Posterior cingulate gyrus (tissue), 11 donors: ENCODE measurements at regions of chr11 and their contacts with region 1.

Region 1: GRCh38 chr11:112670806-112671570 is 290.2 kb upstream of the NCAM1 start:
- DNase-seq: peak in 2 of 10 donors; percentile 45 to 73

Region 2: GRCh38 chr11:112744041-112744440 is 73.1 kb after region 1 on chr11:
- intact Hi-C with region 1: loop called (anchors 2 kb)
- DNase-seq: no peak

Region 3: GRCh38 chr11:112983887-112984286 is 312.9 kb after region 1 on chr11:
- intact Hi-C with region 1: no loop called
- DNase-seq: no peak